CD4-positive, alpha-beta memory T cell (primary cell): ENCODE measurements at regions of chr16 and their contacts with region 1.

Region 1: GRCh38 chr16:2752035-2752849 is at the start of gene SRRM2:
- DNase-seq: peak; percentile 96 to 98 (median 96)
- H3K4me3 ChIP-seq: peak within 1 kb of the TSS; percentile 95 to 97
- H3K4me3 Mint-ChIP-seq: peak within 1 kb of the TSS; percentile 91 to 97 (median 94)
- H3K27ac ChIP-seq: peak within 1 kb of the TSS; percentile 97
- H3K27ac Mint-ChIP-seq: peak within 1 kb of the TSS; percentile 97 to 100 (median 99)
- H3K4me1 ChIP-seq: peaks cover 49% of the 10 kb centered on the region
- H3K4me1 Mint-ChIP-seq: peaks cover 34 to 68% (median 48%) of the 10 kb centered on the region in 4 donors
- H3K27me3 ChIP-seq: no peaks in the 10 kb centered on the region
- H3K27me3 Mint-ChIP-seq: no peaks in the 10 kb centered on the region
- total RNA-seq, gene SRRM2: 1,118 to 1,137 TPM

Region 2: DNA sequence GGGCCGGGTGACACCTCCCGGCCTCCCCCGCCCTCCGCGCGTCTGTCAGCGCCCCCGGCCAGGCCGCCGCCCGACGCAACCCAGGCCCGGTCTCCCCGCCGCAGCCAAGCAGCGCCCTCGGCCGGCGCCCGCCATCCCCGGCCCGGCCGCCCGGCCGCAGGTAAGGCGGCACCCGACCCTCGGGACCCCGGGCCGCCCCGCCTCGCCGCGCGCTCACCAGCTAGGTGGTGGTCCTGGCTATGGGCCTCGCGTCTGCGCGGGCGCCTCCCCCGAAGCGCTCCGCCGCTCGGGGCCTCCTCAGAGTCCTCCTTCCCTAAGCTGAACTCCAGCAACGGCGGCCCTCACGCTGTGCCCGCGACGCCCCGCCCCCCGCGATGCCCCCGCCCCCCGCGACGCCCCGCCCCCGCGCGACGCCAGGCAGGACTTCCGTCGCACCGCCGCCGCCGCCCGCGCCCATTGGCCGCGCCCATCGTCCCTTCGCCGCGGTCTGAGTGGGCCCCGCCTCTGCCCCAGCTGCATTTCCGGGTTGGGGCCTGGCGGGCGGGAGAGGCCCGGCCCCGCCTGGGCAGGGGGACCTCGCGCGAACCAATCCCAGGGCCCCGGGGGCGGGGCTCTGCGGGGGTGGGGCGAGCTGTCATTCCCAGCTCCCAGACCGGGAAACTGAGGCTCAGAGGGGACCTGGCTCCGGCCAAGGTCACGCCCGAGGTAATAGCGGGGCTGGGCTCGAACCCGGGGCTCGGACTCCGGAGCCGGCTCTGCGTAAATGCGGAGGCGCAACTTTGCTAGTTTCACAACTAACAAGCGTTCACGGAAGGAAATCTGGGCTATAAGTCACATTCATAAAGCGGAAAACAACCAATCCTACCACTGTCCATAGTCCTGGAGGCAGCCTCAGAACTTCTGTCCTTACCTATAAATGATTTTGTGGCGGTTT is 78.9 kb before region 1 on chr16:
- CTCF ChIA-PET with region 1: no interaction called
- POLR2A ChIA-PET with region 1: interaction called, 3 read pairs
- intact Hi-C with region 1: loop called (anchors 1 kb)
- DNase-seq: peak; percentile 94 to 98 (median 97)
- H3K4me3 ChIP-seq: peak overlapping the region; percentile 70 to 81
- H3K4me3 Mint-ChIP-seq: peak overlapping the region; percentile 84 to 90 (median 88)
- H3K27ac ChIP-seq: peak overlapping the region; percentile 80
- H3K27ac Mint-ChIP-seq: peak overlapping the region; percentile 82 to 92 (median 87)
- H3K4me1 ChIP-seq: peaks cover 21% of the 10 kb centered on the region
- H3K4me1 Mint-ChIP-seq: peaks cover 14 to 49% (median 26%) of the 10 kb centered on the region in 4 donors
- H3K27me3 ChIP-seq: no peaks in the 10 kb centered on the region
- H3K27me3 Mint-ChIP-seq: no peaks in the 10 kb centered on the region

Region 3: GRCh38 chr16:2682209-2683021 is 69.8 kb before region 1 on chr16 and contains the start of gene KCTD5:
- CTCF ChIA-PET with region 1: no interaction called
- POLR2A ChIA-PET with region 1: interaction called, 16 read pairs
- intact Hi-C with region 1: loop called (anchors 1 kb)
- DNase-seq: peak; percentile 94 to 95 (median 94)
- H3K4me3 ChIP-seq: peak within 1 kb of the TSS; percentile 96 to 98
- H3K4me3 Mint-ChIP-seq: peak within 1 kb of the TSS; percentile 92 to 97 (median 94)
- H3K27ac ChIP-seq: peak within 1 kb of the TSS; percentile 79
- H3K27ac Mint-ChIP-seq: peak within 1 kb of the TSS; percentile 87 to 96 (median 95)
- H3K4me1 ChIP-seq: peaks cover 34% of the 10 kb centered on the region
- H3K4me1 Mint-ChIP-seq: peaks cover 15 to 30% (median 24%) of the 10 kb centered on the region in 4 donors
- H3K27me3 ChIP-seq: no peaks in the 10 kb centered on the region
- H3K27me3 Mint-ChIP-seq: no peaks in the 10 kb centered on the region
- total RNA-seq, gene KCTD5: 26.7 to 27.1 TPM

Region 4: DNA sequence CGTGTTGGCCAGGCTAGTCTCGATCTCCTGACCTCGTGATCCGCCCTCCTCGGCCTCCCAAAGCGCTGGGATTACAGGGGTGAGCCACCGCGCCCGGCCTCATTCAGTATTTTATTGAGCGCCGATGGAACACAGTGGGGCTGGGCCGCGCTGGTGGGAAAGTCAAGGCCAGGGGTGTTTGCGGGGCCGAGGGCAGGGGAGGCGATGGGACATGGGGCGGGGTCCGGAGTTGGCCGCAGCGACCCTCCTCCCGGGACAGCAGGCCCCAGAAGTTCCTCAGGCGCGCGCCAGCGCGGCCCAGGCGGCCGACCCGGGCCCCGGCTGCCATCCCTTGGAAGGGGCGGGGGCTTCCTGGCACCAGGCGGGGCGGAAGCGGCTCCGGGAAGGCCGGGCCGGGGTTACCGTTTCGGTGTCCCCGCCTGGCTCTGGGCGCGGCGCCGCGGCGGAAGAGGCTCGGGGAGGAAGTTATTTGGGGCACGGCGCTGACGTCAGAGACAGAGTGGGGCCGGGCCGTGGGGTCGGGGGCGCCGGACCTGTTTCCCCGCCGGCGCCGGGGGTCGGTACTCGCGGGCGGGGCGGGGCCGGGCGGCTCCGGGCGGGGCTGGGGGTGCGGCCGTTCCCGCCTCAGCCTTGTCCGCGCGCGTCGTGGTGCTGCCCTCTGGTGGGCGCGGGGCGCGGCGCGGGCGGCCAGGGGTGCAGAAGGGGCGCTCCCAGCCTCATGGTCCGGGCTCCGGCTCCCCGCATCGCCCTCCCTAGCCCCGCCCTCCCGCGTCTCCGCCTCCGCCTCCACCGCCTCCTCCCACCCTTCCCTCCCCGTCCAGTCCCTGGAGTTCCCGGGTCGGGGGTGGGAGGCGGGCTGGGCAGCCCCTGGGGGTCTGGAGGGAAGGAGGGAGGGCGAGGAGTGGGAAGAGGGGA is 31.3 kb before region 1 on chr16:
- CTCF ChIA-PET with region 1: no interaction called
- POLR2A ChIA-PET with region 1: interaction called, 4 read pairs
- intact Hi-C with region 1: loop called (anchors 1 kb)
- DNase-seq: peak; percentile 85 to 88 (median 87)
- H3K4me3 ChIP-seq: peak overlapping the region; percentile 17 to 49
- H3K4me3 Mint-ChIP-seq: peak overlapping the region; percentile 70 to 85 (median 74)
- H3K27ac ChIP-seq: peak overlapping the region; percentile 56
- H3K27ac Mint-ChIP-seq: peak overlapping the region; percentile 56 to 90 (median 73)
- H3K4me1 ChIP-seq: peaks cover 5% of the 10 kb centered on the region
- H3K4me1 Mint-ChIP-seq: no peaks in the 10 kb centered on the region
- H3K27me3 ChIP-seq: no peaks in the 10 kb centered on the region
- H3K27me3 Mint-ChIP-seq: peaks cover 4 to 7% of the 10 kb centered on the region in 2 donors

Region 5: DNA sequence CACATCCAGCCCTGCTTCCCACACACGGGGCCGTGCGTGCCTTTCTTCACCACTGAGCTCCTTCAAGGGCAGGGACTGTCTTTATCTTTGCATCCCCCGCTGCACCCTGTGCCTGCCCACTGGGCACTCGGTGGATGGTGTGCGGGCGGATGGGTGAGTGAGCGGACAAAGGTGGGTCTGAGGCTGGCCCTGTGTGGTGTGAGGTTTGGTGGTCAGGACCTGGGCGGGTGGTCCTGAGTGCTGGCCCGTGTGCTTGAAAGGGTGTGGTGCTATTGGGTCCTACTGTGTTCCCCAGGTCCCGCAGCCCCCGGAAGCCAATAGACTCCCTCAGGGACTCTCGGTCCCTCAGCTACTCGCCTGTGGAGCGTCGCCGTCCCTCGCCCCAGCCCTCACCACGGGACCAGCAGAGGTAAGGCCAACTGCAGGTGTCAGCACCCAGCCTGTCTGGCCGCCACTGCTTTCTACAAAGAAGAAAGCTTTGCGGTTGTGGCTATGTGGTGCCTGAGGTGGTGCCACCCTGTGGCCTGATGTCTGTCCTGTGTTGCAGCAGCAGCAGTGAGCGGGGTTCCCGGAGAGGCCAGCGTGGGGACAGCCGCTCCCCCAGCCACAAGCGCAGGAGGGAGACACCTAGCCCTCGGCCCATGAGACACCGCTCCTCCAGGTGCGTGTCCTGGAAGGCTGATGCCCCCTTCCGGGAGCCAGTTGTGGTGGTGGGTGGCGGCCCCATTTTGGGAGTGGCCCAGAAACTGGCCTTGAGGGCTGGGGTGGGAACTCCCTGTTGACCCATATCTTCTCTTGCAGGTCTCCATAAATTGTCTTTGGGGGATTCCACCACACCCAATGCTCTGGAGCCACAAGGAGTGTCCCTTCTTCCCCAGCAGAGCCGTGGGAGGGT is 18.1 kb after region 1 on chr16:
- CTCF ChIA-PET with region 1: no interaction called
- POLR2A ChIA-PET with region 1: interaction called, 142 read pairs
- intact Hi-C with region 1: no loop called
- DNase-seq: peak in 1 of 5 donors; percentile 39
- H3K4me3 ChIP-seq: no peak overlapping the region
- H3K4me3 Mint-ChIP-seq: peak overlapping the region in 1 of 8 donors; percentile 57
- H3K27ac ChIP-seq: no peak overlapping the region
- H3K27ac Mint-ChIP-seq: peak overlapping the region in 5 of 7 donors; percentile 42 to 83 (median 55)
- H3K4me1 ChIP-seq: peaks cover 12% of the 10 kb centered on the region
- H3K4me1 Mint-ChIP-seq: peaks cover 11 to 28% (median 24%) of the 10 kb centered on the region in 4 donors
- H3K27me3 ChIP-seq: no peaks in the 10 kb centered on the region
- H3K27me3 Mint-ChIP-seq: no peaks in the 10 kb centered on the region

Region 6: GRCh38 chr16:2777231-2777902 is 25.1 kb after region 1 on chr16 and contains the start of gene ELOB:
- CTCF ChIA-PET with region 1: interaction called, 3 read pairs
- POLR2A ChIA-PET with region 1: interaction called, 142 read pairs
- intact Hi-C with region 1: loop called (anchors 1 kb)
- DNase-seq: peak; percentile 87 to 89 (median 89)
- H3K4me3 ChIP-seq: peak within 1 kb of the TSS; percentile 49 to 76
- H3K4me3 Mint-ChIP-seq: peak within 1 kb of the TSS; percentile 93 to 99 (median 94)
- H3K27ac ChIP-seq: peak within 1 kb of the TSS; percentile 99
- H3K27ac Mint-ChIP-seq: peak within 1 kb of the TSS; percentile 96 to 99 (median 98)
- H3K4me1 ChIP-seq: peaks cover 38% of the 10 kb centered on the region
- H3K4me1 Mint-ChIP-seq: peaks cover 18 to 44% (median 37%) of the 10 kb centered on the region in 4 donors
- H3K27me3 ChIP-seq: no peaks in the 10 kb centered on the region
- H3K27me3 Mint-ChIP-seq: no peaks in the 10 kb centered on the region
- total RNA-seq, gene ELOB: 83.0 to 86.8 TPM

Region 7: GRCh38 chr16:2784951-2785635 is 32.9 kb after region 1 on chr16:
- CTCF ChIA-PET with region 1: no interaction called
- POLR2A ChIA-PET with region 1: interaction called, 15 read pairs
- intact Hi-C with region 1: no loop called
- DNase-seq: peak in 4 of 5 donors; percentile 28 to 49 (median 36)
- H3K4me3 ChIP-seq: peak overlapping the region; percentile 11 to 59
- H3K4me3 Mint-ChIP-seq: peak overlapping the region; percentile 76 to 89 (median 88)
- H3K27ac ChIP-seq: no peak overlapping the region
- H3K27ac Mint-ChIP-seq: peak overlapping the region in 6 of 7 donors; percentile 29 to 86 (median 72)
- H3K4me1 ChIP-seq: peaks cover 16% of the 10 kb centered on the region
- H3K4me1 Mint-ChIP-seq: peaks cover 1 to 8% (median 5%) of the 10 kb centered on the region in 4 donors
- H3K27me3 ChIP-seq: no peaks in the 10 kb centered on the region
- H3K27me3 Mint-ChIP-seq: peaks cover 6 to 14% of the 10 kb centered on the region in 2 donors